Testis (tissue), 5 donors: ENCODE measurements at regions of chr15 and their contacts with region 1.

Region 1: DNA sequence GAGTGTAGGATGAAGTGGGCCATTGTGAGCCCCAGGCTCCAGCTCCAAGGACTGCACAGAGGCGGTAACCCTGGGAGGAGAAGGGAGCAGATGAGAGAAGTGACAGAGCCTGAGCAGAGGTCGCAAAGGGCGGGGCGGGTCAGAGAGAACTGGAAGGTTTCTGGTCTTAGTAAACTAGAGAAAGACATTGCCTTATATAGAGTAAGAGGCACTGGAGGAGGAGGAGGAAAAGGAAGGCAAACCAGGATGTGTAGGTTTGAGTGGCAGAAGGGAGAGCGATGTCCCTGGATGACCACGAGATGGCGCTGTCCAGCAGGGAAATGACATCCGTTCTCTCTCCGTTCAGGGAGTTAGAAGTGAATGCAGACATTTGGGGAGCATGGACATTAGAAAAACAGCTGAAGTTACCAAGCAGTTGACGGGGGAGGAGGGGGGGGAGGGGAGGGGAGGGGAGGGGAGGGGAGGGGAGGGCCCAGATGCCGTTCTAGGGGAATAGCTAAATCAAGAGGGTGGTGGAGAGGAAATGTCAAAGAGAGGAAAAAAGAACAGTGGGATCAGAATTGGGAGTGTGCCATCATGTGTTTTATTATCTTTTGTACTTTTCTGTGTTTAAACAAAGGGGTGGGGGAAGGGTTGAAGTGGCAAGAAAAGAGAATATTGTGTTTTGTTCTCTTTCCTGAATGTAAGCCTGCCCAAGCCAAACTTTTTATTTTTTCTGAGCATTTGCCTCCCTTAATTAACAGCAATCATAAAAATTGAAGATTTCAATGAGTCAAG is 48.8 kb downstream of the STARD5 start:
- DNase-seq: peak; percentile 78
- H3K4me3 ChIP-seq: no peak overlapping the region
- H3K27ac ChIP-seq: no peak overlapping the region
- H3K4me1 ChIP-seq: peaks cover 13% of the 10 kb centered on the region
- H3K27me3 ChIP-seq: no peaks in the 10 kb centered on the region
- CTCF ChIP-seq: peak; percentile 78 to 93 (median 85)
- POLR2A ChIP-seq: no peak

Region 2: GRCh38 chr15:81336568-81336967 is 61.4 kb after region 1 on chr15:
- intact Hi-C with region 1: loop called (anchors 10 kb)
- DNase-seq: no peak
- H3K4me3 ChIP-seq: no peak overlapping the region
- H3K27ac ChIP-seq: no peak overlapping the region
- H3K4me1 ChIP-seq: peaks cover 47% of the 10 kb centered on the region
- H3K27me3 ChIP-seq: no peaks in the 10 kb centered on the region
- CTCF ChIP-seq: peak in 1 of 3 experiments; percentile 5
- POLR2A ChIP-seq: no peak

Region 3: GRCh38 chr15:81400640-81401236 is 125.6 kb after region 1 on chr15:
- intact Hi-C with region 1: loop called (anchors 5 kb)
- DNase-seq: no peak
- H3K4me3 ChIP-seq: no peak overlapping the region
- H3K27ac ChIP-seq: no peak overlapping the region
- H3K4me1 ChIP-seq: no peaks in the 10 kb centered on the region
- H3K27me3 ChIP-seq: no peaks in the 10 kb centered on the region
- CTCF ChIP-seq: peak; percentile 78 to 90 (median 80)
- POLR2A ChIP-seq: no peak

Region 4: GRCh38 chr15:81449836-81450495 is 174.8 kb after region 1 on chr15:
- intact Hi-C with region 1: no loop called
- DNase-seq: no peak
- H3K4me3 ChIP-seq: no peak overlapping the region
- H3K27ac ChIP-seq: no peak overlapping the region
- H3K4me1 ChIP-seq: no peaks in the 10 kb centered on the region
- H3K27me3 ChIP-seq: no peaks in the 10 kb centered on the region
- CTCF ChIP-seq: no peak
- POLR2A ChIP-seq: no peak